Activated CD4-positive, alpha-beta memory T cell treated with anti-CD3 and anti-CD28 coated beads, Interleukin-2, amount 10 ng/mL, durations not matched to agents 7 days and 5 days (primary cell): ENCODE measurements at regions of chr19 and their contacts with region 1.

Region 1: DNA sequence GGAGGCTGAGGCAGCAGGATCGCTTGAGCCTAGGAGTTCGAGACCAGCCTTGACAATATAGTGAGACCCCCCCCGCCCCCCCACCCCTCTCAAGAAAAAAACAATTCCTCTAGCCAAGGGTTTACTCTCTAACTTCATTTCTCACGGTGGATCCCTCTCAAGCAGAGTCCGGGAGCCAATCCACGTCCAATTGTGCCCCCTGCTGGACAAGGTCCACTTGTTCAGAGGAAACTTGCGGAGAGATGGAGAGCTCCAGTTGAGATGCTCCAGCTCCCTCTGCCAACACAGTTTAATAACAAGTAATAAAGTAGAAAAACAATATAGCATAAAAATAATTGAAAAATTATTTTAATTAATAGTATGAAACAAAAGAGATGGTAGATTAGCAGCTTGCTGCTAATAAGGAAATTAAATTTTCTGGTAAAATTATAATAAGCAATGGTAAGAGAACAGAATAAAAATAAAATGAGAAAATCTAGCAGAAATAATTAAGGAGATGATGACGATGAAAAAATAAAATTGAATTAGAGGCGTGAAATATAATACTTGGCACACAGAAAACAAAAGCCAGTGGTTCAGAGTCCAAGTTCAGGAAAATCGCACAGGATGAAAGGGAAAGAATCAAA is 14.5 kb upstream of the SIGLEC14 start:
- DNase-seq: peak; percentile 66
- H3K4me3 Mint-ChIP-seq: no peak overlapping the region
- H3K27ac Mint-ChIP-seq: no peak overlapping the region
- H3K4me1 Mint-ChIP-seq: peaks cover 5% of the 10 kb centered on the region
- H3K27me3 Mint-ChIP-seq: peaks cover 24% of the 10 kb centered on the region

Region 2: GRCh38 chr19:51422053-51422448 is 239.0 kb before region 1 on chr19:
- CTCF ChIA-PET with region 1: interaction called, 17 read pairs
- POLR2A ChIA-PET with region 1: no interaction called
- DNase-seq: peak; percentile 88
- H3K4me3 Mint-ChIP-seq: no peak overlapping the region
- H3K27ac Mint-ChIP-seq: no peak overlapping the region
- H3K4me1 Mint-ChIP-seq: peaks cover 9% of the 10 kb centered on the region
- H3K27me3 Mint-ChIP-seq: peaks cover 24% of the 10 kb centered on the region

Region 3: GRCh38 chr19:51441410-51442390 is 219.4 kb before region 1 on chr19:
- CTCF ChIA-PET with region 1: interaction called, 10 read pairs
- POLR2A ChIA-PET with region 1: no interaction called
- DNase-seq: peak; percentile 95
- H3K4me3 Mint-ChIP-seq: peak overlapping the region; percentile 72
- H3K27ac Mint-ChIP-seq: peak overlapping the region; percentile 77
- H3K4me1 Mint-ChIP-seq: peaks cover 47% of the 10 kb centered on the region
- H3K27me3 Mint-ChIP-seq: peaks cover 29% of the 10 kb centered on the region

Region 4: GRCh38 chr19:51467864-51468544 is 193.1 kb before region 1 on chr19:
- CTCF ChIA-PET with region 1: interaction called, 66 read pairs
- POLR2A ChIA-PET with region 1: interaction called, 3 read pairs
- DNase-seq: no peak
- H3K4me3 Mint-ChIP-seq: no peak overlapping the region
- H3K27ac Mint-ChIP-seq: no peak overlapping the region
- H3K4me1 Mint-ChIP-seq: peaks cover 39% of the 10 kb centered on the region
- H3K27me3 Mint-ChIP-seq: peaks cover 29% of the 10 kb centered on the region

Region 5: DNA sequence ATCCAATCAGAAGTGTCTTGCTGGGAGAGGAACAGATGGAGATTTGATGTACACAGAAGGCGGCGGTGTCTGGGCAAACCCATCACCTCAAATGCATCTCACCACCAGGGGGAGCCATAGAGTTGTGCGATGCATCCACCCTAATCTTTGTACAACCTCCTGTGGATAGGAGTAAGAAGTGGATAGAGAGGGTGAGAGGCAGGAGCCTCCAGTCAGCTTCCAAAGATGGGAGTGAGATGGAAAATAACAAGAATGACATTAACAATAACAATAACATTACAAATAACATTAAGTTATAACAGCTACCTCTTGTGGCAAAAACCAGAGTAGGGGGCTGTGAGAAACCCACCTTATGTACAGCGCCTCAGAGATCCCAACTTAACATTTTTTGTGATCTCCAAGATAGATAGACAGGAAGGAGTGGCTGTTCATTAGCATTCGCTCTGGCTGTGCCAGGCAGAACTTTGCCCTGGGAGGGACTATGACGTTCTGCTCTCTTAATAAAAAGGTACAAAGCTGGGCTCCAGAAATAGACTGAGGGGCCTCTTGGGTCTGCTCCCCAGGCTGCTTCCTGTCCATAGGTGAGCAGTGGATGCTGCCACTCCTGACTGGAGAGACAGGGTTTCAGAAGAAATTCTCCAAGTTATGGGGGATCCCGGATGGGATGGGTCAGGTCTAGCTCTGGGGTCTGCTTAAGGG is 187.9 kb before region 1 on chr19:
- CTCF ChIA-PET with region 1: interaction called, 66 read pairs
- POLR2A ChIA-PET with region 1: no interaction called
- DNase-seq: peak; percentile 82
- H3K4me3 Mint-ChIP-seq: no peak overlapping the region
- H3K27ac Mint-ChIP-seq: no peak overlapping the region
- H3K4me1 Mint-ChIP-seq: peaks cover 13% of the 10 kb centered on the region
- H3K27me3 Mint-ChIP-seq: peaks cover 8% of the 10 kb centered on the region

Region 6: GRCh38 chr19:51676566-51677083 is 15.5 kb after region 1 on chr19:
- CTCF ChIA-PET with region 1: interaction called, 18 read pairs
- POLR2A ChIA-PET with region 1: no interaction called
- DNase-seq: no peak
- H3K4me3 Mint-ChIP-seq: no peak overlapping the region
- H3K27ac Mint-ChIP-seq: no peak overlapping the region
- H3K4me1 Mint-ChIP-seq: peaks cover 8% of the 10 kb centered on the region
- H3K27me3 Mint-ChIP-seq: peaks cover 14% of the 10 kb centered on the region

Region 7: DNA sequence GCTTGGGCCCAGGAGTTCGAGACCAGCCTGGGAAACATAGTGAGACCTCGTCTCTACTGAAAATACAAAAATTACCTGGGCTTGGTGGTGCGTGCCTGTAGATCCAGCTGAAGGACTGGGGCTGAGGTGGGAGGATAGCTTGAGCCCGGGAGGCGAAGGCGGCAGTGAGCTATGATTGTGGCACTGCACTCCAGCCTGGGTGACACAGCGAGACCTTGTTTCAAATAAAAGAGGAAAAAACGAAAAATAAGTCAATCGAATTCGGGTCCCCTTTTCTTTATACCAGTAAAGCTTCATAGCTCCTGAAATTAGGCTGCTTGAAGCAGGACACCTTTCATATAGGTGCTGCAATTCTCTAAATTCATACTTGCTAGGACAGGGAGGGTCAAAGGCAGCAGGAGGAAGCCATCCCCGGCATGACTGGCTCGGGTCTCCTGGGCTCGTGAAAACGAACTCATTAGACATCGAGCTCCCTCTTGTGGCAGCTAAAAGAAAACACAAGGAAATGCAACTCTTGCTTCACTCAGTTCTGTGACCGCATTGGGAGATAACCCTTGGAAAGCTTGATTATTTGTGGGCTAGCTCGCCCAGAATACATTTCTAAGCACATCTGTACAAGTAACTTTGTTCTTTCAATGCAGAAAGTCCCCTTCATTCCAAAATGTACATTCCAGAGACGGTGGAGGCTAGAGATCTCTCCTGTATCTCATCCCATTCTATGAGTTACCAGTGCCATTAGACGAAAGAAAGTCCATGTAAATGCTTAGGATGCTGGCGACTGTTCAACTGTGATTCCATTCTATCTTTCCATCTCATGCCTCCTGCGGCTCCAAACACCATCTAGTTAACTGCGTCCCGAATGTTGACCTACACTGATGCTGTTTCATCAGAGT is 116.7 kb after region 1 on chr19:
- CTCF ChIA-PET with region 1: interaction called, 10 read pairs
- POLR2A ChIA-PET with region 1: no interaction called
- DNase-seq: peak; percentile 24
- H3K4me3 Mint-ChIP-seq: no peak overlapping the region
- H3K27ac Mint-ChIP-seq: no peak overlapping the region
- H3K4me1 Mint-ChIP-seq: peaks cover 2% of the 10 kb centered on the region
- H3K27me3 Mint-ChIP-seq: peaks cover 18% of the 10 kb centered on the region